HepG2 (cell line): ENCODE measurements at regions of chr7 and their contacts with region 1.

Region 1: DNA sequence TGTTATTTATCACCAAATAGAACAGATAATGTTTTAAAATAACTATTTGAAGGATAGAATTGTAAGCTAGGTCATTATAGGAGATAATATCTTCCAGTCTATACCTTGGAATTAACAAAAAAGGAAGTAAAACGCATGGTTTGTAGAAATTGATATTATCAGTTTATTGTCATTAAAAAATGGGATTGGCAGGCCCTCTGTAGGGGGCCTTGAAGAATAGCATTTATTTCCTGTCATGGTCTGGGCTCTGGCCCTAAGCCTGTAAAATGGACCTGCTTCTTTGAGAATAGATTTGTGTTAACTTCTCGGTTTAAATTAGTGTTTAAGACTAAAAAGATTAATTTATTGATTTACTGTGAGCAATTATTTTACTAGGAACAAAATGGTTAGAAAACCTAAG is 197.6 kb upstream of the FOXP2 start:
- DNase-seq: no peak
- ATAC-seq: no peak
- H3K4me3 ChIP-seq: no peak overlapping the region
- H3K27ac ChIP-seq: no peak overlapping the region
- H3K4me1 ChIP-seq: no peaks in the 10 kb centered on the region
- H3K27me3 ChIP-seq: no peaks in the 10 kb centered on the region
- CTCF ChIP-seq: no peak
- EP300 ChIP-seq: no peak
- POLR2A ChIP-seq: no peak
- RAD21 ChIP-seq: no peak

Region 2: DNA sequence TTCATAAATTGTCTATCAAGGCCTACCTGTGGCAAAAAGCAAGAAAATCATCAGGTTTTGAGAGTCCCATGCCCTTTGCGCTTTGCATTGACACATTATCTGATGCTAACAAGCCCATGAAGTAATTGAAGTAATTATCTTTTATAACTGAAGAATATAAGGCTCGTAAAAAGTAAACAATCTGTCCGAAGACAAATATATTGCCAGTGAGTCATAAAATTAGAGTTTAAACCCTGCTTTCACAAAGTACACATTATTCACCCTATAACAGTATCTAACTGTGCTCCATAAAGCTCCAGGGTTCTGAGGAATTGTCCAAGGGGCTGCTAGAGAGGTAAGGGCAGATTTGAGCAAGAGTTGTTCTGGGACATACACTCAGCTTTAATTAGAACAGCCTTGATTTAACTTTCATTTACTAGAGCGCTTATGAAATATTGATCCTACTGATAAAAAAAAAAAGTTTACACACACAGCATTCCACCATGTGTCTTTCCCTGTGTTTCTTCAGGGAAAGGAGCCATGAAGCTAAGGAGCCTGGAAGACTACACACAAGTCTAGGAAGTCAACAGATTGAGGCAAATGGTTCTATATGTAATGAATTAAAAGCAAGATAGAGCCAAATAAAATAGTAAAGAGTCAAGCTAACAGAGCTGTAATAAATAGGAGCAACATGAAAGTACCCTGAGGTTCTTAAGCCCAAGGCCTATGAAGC is 195.7 kb before region 1 on chr7:
- CTCF ChIA-PET with region 1: no interaction called
- POLR2A ChIA-PET with region 1: no interaction called
- in situ Hi-C with region 1: no loop called
- intact Hi-C with region 1: loop called (anchors 5 kb)
- DNase-seq: no peak
- ATAC-seq: no peak
- H3K4me3 ChIP-seq: no peak overlapping the region
- H3K27ac ChIP-seq: no peak overlapping the region
- H3K4me1 ChIP-seq: no peaks in the 10 kb centered on the region
- H3K27me3 ChIP-seq: no peaks in the 10 kb centered on the region
- CTCF ChIP-seq: no peak
- EP300 ChIP-seq: no peak
- POLR2A ChIP-seq: no peak
- RAD21 ChIP-seq: no peak